BJ (cell line): ENCODE measurements at regions of chr19 and their contacts with region 1.

Region 1: DNA sequence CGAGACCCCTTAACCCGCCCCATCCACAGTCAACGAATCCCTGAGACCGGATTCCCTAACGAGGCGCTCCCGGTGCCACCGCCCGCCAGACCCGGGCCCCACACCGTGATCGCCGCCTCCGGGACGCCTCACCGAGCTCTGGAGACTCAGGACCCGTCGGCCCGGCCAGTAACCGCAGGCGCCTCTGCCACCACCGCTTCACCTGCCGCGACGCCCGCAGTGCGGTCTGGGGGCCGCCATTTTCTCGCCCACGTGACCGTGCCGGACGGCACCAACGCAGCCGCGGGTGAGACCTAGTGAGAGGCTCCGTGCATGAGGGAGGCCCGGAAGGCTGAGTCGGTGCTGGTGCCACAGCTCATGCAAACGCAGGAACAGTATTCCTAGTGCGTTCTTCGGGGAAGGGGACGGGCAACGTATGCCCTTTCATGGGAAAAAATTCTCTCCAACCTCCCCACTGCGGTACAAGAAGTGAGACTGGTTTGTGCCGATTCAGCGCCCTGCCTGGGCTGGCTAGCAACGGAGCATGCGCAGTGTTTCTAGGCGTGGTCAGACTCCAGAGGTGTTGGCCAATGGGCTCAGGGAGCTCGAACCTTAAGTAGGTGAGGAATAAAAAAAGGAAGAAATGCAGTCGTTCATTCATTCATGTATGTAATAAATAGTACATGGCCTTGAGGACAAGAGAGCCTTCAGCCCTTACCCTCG is at the start of gene DOHH:
- DNase-seq: peak; percentile 77
- H3K4me3 ChIP-seq: peak within 1 kb of the TSS; percentile 80
- H3K27me3 ChIP-seq: no peaks in the 10 kb centered on the region
- CTCF ChIP-seq: no peak
- polyA plus RNA-seq, gene DOHH: 3.9 and 8.3 TPM in 2 replicates

Region 2: GRCh38 chr19:3210347-3211017 is 290.1 kb before region 1 on chr19:
- CTCF ChIA-PET with region 1: no interaction called
- POLR2A ChIA-PET with region 1: no interaction called
- DNase-seq: no peak
- H3K4me3 ChIP-seq: no peak overlapping the region
- H3K27me3 ChIP-seq: no peaks in the 10 kb centered on the region
- CTCF ChIP-seq: peak; percentile 79

Region 3: DNA sequence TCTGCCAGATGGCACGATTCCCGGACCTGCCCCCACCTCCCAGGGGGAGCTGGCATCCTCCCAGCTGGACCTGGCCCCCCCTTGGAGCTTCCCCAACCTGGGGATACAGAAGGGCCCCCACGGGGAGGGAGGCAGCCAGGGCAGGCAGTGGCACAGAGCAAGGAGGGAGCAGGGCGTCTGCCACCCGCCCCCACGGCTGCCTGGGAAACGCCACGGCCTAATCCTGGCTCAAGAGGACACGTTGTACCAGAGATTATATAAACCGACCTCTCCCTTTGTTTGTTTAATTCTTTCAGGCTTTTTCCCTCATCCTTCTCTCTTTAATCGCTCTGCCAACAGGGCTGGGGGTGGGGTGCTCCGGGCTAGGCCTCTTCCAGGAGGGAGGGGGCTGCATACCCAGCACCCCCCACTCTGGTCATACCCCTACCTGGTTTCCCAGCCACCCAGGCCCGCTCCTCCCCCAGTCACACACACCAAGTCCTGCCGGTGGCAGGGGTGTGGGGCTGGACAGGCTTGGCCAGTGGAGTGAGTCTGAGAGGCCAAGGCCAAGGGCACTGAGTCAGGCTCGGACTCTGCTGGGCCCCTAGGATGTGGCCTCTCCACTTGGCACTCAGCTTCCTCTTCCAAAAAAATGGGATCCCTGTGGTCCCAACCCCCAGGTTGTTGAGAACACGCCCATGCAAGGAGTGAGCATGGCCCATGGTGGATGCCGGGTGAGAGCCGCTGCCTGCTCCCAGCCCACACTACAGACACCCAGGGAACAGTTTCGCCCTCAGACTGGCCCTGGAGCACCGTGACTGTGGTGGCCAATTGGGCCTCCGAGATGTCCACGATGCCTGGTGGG is 163.7 kb before region 1 on chr19:
- CTCF ChIA-PET with region 1: no interaction called
- POLR2A ChIA-PET with region 1: interaction called, 19 read pairs
- DNase-seq: no peak
- H3K4me3 ChIP-seq: no peak overlapping the region
- H3K27me3 ChIP-seq: no peaks in the 10 kb centered on the region
- CTCF ChIP-seq: no peak

Region 4: DNA sequence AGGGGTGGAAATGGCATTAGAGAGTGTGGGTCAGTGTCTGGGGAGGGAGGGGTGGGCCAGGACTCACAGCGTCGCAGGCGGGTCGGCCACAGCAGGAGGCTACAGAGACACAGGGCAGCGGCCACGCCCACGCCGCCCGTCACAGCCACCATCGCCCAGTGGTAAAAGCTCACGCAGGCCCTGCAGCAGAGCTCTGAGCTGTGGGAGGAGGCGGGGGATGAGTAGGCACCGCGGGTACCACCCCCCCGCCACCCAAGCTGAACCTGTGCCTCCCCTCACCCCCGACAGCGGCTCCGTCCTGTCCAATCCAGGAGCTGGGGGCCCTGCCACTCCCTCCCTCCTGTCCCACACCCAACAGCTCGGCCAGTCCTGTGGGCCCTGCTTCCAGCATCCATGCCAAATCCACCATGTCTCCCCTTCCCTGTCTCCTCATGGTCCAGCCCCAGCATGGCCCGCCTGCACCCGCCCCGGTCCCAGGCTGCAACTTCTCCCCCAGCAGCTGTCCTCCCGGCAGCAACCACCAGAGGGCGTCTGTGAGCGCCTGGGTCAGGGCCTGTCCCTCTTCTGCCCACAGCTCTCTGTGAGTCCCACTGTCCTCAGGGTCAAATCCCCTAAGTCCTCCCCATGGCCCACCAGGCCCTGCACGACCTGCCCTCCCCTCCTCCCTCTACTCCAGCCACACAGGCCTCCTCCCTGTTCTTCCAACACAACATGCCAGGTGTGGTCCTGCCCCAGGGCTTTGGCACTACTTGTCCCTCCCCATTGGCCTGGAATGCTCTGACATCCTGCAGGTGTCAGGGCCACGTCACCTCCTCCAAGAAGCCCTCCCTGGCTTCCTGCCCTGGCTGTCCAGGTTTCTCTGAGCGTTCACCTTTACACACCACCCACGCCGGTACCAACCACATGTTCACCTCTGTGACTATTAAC is 44.4 kb after region 1 on chr19:
- CTCF ChIA-PET with region 1: no interaction called
- POLR2A ChIA-PET with region 1: no interaction called
- DNase-seq: no peak
- H3K4me3 ChIP-seq: no peak overlapping the region
- H3K27me3 ChIP-seq: no peaks in the 10 kb centered on the region
- CTCF ChIP-seq: peak; percentile 98